ENCODE measurements at regions of chr4 and their contacts with region 1.

Region 1: DNA sequence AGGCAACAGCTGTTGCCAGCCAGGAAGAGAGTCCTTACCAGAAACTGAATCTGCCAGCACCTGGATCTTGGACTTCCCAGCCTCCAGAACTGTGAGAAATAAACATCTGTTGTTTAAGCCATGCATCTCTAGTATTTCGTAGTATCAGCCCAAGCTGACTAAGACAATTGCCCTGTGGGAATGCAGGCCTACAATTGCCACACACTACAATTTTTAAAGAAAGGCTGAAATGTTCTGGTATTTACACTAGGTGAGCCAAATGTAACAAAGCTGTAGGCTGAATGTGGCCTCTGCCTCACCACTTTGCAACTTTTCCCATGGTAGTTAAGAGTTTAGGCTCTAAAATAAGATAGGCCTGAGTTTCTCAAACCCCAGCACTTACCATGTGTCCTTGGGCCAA is 59.1 kb downstream of the SPATA18 start:
- DNase-seq: no peak
- ATAC-seq: no peak
- H3K4me3 ChIP-seq: no peak overlapping the region
- H3K27ac ChIP-seq: no peak overlapping the region
- H3K4me1 ChIP-seq: no peaks in the 10 kb centered on the region
- H3K27me3 ChIP-seq: no peaks in the 10 kb centered on the region
- CTCF ChIP-seq: no peak
- POLR2A ChIP-seq: no peak

Region 2: DNA sequence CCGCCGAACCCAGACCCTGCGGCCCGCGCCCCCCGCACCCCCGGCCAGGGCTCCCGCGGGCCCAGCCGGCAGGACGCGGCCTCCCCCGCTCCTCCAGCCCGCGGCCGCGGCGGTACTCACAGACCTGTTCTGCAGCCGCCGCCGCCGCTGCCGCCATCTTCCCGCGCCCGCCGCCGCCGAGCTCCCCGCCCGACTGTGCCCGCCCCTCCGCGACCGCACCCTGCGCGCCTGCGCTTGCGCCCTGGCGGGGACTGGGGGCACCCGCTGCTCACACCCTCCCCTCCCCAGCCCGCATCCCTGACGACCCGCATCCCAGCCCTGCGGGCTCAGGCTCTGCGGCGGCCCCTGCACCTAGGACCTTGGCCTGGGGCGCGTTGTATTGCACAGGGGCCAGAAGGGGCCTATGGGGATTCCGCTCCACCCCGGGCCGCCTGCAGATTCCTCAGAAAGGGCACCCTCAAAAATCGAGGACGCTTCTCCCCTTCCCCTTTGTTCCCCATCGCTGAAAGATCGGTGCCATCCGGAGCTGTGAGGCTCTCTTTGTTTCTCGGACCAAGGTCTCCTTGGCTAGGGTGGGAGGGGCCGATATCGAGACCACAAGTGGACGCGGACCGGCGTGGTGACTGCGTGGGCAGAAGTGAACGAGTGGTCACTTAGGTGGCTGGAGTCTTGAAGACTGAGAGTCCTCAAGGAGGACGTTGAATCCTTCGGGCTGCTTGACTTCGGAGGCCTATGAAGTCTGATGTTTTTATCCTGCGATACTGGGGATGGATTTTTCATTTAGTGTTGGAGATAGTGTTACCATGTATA is 71.9 kb before region 1 on chr4 and contains the start of gene SGCB:
- intact Hi-C with region 1: no loop called
- DNase-seq: peak; percentile 76 to 90 (median 80)
- ATAC-seq: peak; percentile 76 to 94 (median 92)
- H3K4me3 ChIP-seq: peak within 1 kb of the TSS; percentile 60 to 94 (median 78)
- H3K27ac ChIP-seq: peak within 1 kb of the TSS; percentile 62 to 92 (median 85)
- H3K4me1 ChIP-seq: peaks cover 3 to 31% (median 20%) of the 10 kb centered on the region in 12 donors
- H3K27me3 ChIP-seq: peaks cover 0 to 27% (median 0%) of the 10 kb centered on the region in 9 donors
- CTCF ChIP-seq: no peak
- POLR2A ChIP-seq: peak in 1 of 2 donors; percentile 49
- total RNA-seq, gene SGCB: 50.3 to 111 (median 73.8) TPM

Region 3: GRCh38 chr4:52059372-52059771 is 50.8 kb before region 1 on chr4:
- intact Hi-C with region 1: no loop called
- DNase-seq: peak in 2 of 5 donors; percentile 21
- ATAC-seq: peak in 3 of 4 donors; percentile 52 to 82 (median 72)
- H3K4me3 ChIP-seq: no peak overlapping the region
- H3K27ac ChIP-seq: no peak overlapping the region
- H3K4me1 ChIP-seq: peaks cover 0 to 17% (median 7%) of the 10 kb centered on the region in 12 donors
- H3K27me3 ChIP-seq: no peaks in the 10 kb centered on the region
- CTCF ChIP-seq: no peak
- POLR2A ChIP-seq: no peak

Region 4: DNA sequence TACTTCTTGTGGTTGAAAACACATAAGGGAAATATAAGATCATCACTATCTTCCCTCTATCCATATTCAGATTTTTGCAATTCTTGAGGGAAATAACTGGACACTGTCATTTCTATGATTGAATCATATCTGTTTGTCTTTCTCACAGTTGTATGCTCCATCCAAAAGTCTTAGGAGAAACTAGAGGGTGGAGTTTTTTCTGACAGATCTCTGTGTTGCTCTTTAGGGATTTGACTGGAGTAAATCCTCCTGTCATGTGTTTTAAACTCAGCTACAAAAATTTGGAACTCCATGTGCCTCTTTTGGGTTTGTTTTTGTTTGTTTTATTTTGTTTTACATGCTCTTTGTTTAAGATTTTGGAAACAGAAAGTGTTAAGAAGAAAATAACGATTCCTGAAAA is 77.4 kb after region 1 on chr4:
- intact Hi-C with region 1: loop called in 1 of 10 experiments (anchors 10 kb)
- DNase-seq: no peak
- ATAC-seq: peak in 1 of 4 donors; percentile 32
- H3K4me3 ChIP-seq: no peak overlapping the region
- H3K27ac ChIP-seq: no peak overlapping the region
- H3K4me1 ChIP-seq: peaks cover 0 to 7% (median 0%) of the 10 kb centered on the region in 12 donors
- H3K27me3 ChIP-seq: peaks cover 0 to 3% (median 0%) of the 10 kb centered on the region in 9 donors
- CTCF ChIP-seq: no peak
- POLR2A ChIP-seq: no peak

Measured in heart left ventricle (tissue), 16 donors.